MCF 10A (cell line): ENCODE measurements at regions of chr10 and their contacts with region 1.

Region 1: GRCh38 chr10:103153302-103154197 is 39.5 kb downstream of the NT5C2 start:
- DNase-seq: peak; percentile 38
- H3K4me3 Mint-ChIP-seq: peak overlapping the region; percentile 58
- H3K27ac Mint-ChIP-seq: peak overlapping the region; percentile 82
- H3K4me1 Mint-ChIP-seq: peaks cover 18% of the 10 kb centered on the region
- H3K27me3 Mint-ChIP-seq: no peaks in the 10 kb centered on the region
- CTCF ChIP-seq: no peak

Region 2: DNA sequence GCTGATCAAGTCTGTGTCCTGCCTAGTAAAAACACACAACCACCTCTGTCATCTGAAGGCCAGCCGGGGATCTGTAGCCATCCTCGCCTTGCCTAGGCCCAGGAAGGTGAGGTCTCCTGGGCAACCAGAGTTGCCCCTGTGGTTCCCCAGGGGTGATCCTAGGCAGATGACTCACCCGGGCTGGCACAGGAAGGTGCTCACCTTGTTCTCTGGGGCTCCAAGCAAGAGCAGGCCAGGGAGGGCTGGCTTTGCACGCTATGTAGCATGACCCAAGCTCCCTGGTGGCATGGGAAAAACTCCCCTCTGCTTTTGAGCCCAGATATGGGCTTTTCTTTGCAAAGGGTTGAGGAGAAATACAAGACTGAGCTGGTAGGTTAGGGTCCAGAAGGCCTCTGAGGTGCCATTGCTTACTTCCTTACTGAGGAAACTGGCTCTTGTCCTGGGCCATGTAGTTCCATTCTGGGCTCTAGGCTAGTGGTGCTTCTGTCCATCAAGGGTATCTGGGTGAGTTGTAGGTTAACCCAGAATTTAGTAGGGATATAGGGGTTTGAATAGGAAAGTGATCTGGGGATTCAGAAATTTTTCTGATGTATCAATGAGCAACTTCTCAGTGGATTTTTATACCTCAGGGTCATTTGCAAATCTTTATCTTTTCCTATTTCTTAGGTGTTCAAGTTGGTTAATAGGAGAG is 72.5 kb before region 1 on chr10:
- CTCF ChIA-PET with region 1: no interaction called
- POLR2A ChIA-PET with region 1: no interaction called
- intact Hi-C with region 1: no loop called
- DNase-seq: peak; percentile 41
- H3K4me3 Mint-ChIP-seq: no peak overlapping the region
- H3K27ac Mint-ChIP-seq: no peak overlapping the region
- H3K4me1 Mint-ChIP-seq: no peaks in the 10 kb centered on the region
- H3K27me3 Mint-ChIP-seq: no peaks in the 10 kb centered on the region
- CTCF ChIP-seq: no peak

Region 3: GRCh38 chr10:103120977-103121735 is 32.4 kb before region 1 on chr10:
- CTCF ChIA-PET with region 1: no interaction called
- POLR2A ChIA-PET with region 1: interaction called, 10 read pairs
- intact Hi-C with region 1: no loop called
- DNase-seq: peak; percentile 44
- H3K4me3 Mint-ChIP-seq: no peak overlapping the region
- H3K27ac Mint-ChIP-seq: no peak overlapping the region
- H3K4me1 Mint-ChIP-seq: no peaks in the 10 kb centered on the region
- H3K27me3 Mint-ChIP-seq: no peaks in the 10 kb centered on the region
- CTCF ChIP-seq: no peak

Region 4: DNA sequence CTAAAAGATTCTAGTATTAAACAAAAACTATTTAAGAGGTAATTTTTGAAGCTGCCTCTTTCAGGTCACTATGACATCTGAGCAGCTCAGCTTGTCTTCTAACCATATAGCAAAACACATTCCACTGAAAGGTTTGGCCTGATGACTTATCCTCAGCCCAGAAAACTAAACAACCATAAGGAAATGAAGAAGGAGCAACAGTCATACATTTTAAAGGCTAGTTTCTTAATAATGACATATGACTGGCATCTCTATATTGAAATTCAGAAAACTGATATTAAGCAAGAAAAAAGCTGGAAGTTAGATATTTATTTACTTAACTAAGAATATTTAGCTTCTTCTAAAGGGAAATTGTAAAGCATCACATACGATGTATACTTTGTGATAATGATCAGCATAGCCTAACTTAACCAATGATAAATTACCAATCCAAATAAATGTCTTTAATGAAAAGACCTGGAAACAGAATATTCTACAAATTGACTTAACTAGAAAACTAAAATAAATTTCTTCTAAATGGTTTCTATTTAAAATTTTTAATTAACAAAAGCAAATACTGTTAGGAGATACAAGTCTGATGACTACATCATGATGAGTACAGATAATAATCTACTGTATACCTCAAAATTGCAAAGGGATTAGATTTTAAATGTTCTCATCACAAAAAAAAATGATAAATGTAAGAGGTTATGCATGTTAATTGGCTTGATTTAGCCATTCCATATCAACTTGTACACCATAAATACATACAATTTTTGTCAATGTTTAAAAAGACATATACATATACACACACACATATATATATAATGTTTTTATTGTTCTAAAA is 15.1 kb after region 1 on chr10:
- CTCF ChIA-PET with region 1: interaction called, 4 read pairs
- POLR2A ChIA-PET with region 1: interaction called, 20 read pairs
- intact Hi-C with region 1: no loop called
- DNase-seq: peak; percentile 50
- H3K4me3 Mint-ChIP-seq: no peak overlapping the region
- H3K27ac Mint-ChIP-seq: peak overlapping the region; percentile 81
- H3K4me1 Mint-ChIP-seq: no peaks in the 10 kb centered on the region
- H3K27me3 Mint-ChIP-seq: no peaks in the 10 kb centered on the region
- CTCF ChIP-seq: no peak

Region 5: GRCh38 chr10:103254538-103255325 is 101.2 kb after region 1 on chr10:
- CTCF ChIA-PET with region 1: no interaction called
- POLR2A ChIA-PET with region 1: no interaction called
- intact Hi-C with region 1: no loop called
- DNase-seq: peak; percentile 79
- H3K4me3 Mint-ChIP-seq: peak overlapping the region; percentile 49
- H3K27ac Mint-ChIP-seq: peak overlapping the region; percentile 61
- H3K4me1 Mint-ChIP-seq: peaks cover 18% of the 10 kb centered on the region
- H3K27me3 Mint-ChIP-seq: no peaks in the 10 kb centered on the region
- CTCF ChIP-seq: no peak